Heart right ventricle (tissue), 16 donors: ENCODE measurements at regions of chr7 and their contacts with region 1.

Region 1: GRCh38 chr7:6317797-6318438 is 45.5 kb upstream of the CYTH3 start:
- DNase-seq: peak; percentile 52 to 79
- ATAC-seq: peak; percentile 85 to 96 (median 94)
- H3K4me3 ChIP-seq: peak overlapping the region in 8 of 10 donors; percentile 5 to 40 (median 22)
- H3K27ac ChIP-seq: peak overlapping the region; percentile 4 to 85 (median 73)
- H3K4me1 ChIP-seq: peaks cover 3 to 32% (median 18%) of the 10 kb centered on the region in 9 donors
- H3K27me3 ChIP-seq: no peaks in the 10 kb centered on the region
- CTCF ChIP-seq: no peak

Region 2: GRCh38 chr7:5200561-5201270 is 1117.2 kb before region 1 on chr7:
- intact Hi-C with region 1: no loop called
- DNase-seq: no peak
- ATAC-seq: no peak
- H3K4me3 ChIP-seq: no peak overlapping the region
- H3K27ac ChIP-seq: no peak overlapping the region
- H3K4me1 ChIP-seq: peaks cover 0 to 26% (median 8%) of the 10 kb centered on the region in 9 donors
- H3K27me3 ChIP-seq: no peaks in the 10 kb centered on the region
- CTCF ChIP-seq: no peak

Region 3: GRCh38 chr7:6256677-6257535 is 61.0 kb before region 1 on chr7:
- intact Hi-C with region 1: loop called in 1 of 10 experiments (anchors 5 kb)
- DNase-seq: peak; percentile 47 to 62
- ATAC-seq: peak; percentile 53 to 88 (median 73)
- H3K4me3 ChIP-seq: peak overlapping the region in 1 of 10 donors; percentile 11
- H3K27ac ChIP-seq: peak overlapping the region; percentile 4 to 79 (median 66)
- H3K4me1 ChIP-seq: peaks cover 18 to 100% (median 86%) of the 10 kb centered on the region in 9 donors
- H3K27me3 ChIP-seq: no peaks in the 10 kb centered on the region
- CTCF ChIP-seq: no peak